Right ventricle myocardium inferior (tissue), 1 donor: ENCODE measurements at regions of chr2 and their contacts with region 1.

Region 1: DNA sequence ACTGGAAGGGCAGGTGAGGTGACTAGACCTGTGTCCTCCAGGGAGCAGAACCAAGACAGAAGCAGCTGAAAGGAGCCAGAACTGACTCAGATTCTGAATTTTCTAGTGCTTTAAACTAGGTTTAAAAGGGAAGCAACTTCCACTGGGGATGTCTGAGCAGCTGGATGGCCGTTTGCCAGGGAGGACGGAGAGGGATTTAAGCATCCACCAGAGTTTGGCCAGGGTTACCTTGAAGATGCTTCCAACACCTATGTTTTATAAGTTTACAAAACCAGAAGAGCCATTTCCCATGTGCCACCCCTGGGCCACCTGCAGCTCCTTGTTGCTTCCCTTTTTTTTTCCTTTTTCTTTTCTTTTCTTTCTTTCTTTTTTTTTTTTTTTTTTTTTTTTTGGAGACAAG is 48.6 kb upstream of the RBM44 start:
- DNase-seq: no peak
- ATAC-seq: no peak

Region 2: DNA sequence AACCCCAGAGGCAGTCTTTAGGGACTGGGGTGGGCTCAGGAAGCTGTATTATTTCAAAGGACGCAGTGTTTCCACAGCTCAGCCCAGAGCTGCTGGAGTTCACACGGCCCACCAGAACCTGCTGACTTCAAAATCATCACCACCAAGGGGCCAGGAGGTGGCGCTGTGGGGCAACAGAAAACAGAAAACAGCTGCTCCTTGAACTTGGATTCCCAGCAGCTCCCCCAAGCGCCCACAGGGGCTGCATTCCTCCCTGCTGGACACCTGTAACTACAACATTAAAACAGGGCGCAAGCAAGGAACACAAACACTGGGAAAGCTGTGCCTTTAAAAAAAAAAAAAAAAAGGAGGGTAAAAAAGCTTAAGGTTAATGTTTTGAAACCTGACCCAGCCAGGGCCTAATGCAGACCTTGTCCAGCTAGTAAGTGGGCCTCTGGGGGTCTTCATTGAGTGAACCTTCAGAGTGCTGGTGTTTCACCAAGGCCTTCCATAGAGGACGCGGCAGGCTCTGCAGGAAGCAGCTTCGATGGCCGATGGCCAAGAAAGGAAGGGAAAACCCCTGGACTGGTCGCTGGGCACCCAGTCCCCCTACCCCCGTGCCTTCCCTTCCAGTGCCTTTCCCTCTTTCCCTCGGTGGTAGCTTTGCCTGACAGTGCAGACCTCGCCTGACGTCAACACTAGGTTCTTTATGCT is 237.0 kb before region 1 on chr2:
- intact Hi-C with region 1: loop called (anchors 2 kb)
- DNase-seq: peak; percentile 91
- ATAC-seq: peak; percentile 70